Right ventricle myocardium inferior (tissue), 1 donor: ENCODE measurements at regions of chr15 and their contacts with region 1.

Region 1: DNA sequence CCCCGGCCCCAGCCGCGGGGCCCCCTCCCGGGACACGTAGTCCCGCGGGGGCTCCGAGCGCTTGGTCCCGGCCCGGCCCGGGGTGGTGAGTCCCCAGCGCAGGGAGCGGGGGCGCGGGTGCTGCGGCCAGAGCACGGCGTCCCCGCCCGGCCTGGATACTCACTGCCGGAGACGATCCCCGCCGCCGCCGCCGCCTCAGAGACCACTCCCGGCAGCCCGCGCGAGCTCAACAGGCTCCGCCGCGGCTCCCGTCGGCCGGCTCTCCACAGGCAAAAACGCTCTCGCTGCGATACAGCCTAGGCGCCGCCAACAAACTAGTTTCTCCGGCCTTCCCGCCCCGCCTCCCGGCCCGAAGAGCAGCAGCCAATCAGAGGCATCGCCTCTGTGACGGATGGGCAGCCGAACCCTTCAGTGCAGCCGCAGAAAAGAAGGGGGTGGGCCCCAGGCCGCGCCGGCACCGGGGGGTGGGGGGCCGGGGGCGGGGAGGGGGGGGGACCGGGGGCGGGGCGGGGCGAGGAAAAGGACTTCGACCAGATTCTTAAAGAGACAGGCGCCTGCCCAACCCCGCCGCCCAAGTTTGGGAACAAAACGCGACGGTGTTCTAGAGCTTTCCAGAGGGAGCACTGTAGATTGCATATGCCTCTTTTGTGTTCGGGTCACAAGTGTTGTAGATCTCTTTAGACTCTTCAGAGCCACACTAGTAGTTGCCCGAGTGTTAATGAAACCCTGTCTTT is at the start of gene KLHL25:
- DNase-seq: peak; percentile 97
- ATAC-seq: peak; percentile 99
- total RNA-seq, gene KLHL25: 4.5 TPM

Region 2: GRCh38 chr15:85750319-85750806 is 44.4 kb before region 1 on chr15:
- intact Hi-C with region 1: loop called (anchors 5 kb)
- DNase-seq: peak; percentile 88
- ATAC-seq: peak; percentile 75

Region 3: DNA sequence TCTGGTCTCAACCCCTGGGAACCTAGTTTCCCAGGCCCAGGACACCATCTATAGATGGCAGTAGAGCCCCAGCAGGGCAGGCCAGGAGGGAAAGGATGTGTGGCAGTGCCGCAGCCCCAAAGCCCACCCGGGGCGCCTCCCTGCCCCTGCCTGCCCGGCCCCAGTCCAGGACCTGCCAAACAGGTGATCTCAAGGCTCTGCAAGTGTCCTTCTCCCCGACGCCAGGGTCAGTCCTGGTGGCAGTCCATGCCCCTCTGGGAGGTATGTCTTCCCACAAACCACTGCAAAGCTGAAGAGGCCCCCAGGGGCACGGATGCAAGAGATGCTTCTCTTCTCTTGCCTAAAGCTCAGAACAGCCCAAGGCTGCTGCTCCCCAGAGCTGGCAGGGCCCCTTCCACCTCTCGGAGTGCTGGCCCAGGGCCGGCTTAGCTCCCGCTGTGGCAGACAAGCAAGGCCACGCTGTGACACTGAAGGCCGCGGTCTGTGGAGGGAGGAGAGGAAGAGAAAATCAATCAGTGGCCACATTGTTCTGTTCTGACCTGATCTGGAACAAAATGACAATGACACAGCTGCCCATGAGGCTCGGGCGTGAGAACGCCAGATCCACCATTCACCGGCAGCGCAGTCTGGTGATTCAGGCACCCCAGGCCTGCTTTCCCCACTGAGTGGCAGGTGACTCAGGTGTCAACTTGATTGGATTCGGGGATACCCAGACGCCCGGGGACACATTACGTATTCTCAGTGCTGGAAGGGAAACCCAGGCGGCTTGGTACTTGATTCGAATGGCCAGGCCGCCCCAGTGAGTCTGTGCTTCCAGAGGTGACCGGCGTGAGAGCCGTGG is 34.0 kb before region 1 on chr15:
- intact Hi-C with region 1: no loop called
- DNase-seq: no peak
- ATAC-seq: no peak